ENCODE measurements at regions of chr12 and their contacts with region 1.

Region 1: GRCh38 chr12:105409801-105410471 is 79.4 kb downstream of the C12orf75 start:
- DNase-seq: no peak
- H3K4me3 ChIP-seq: no peak overlapping the region
- H3K27ac ChIP-seq: no peak overlapping the region
- H3K4me1 ChIP-seq: no peaks in the 10 kb centered on the region
- H3K27me3 ChIP-seq: no peaks in the 10 kb centered on the region
- CTCF ChIP-seq: no peak
- POLR2A ChIP-seq: no peak

Region 2: GRCh38 chr12:105292705-105293104 is 117.2 kb before region 1 on chr12:
- intact Hi-C with region 1: no loop called
- DNase-seq: no peak
- H3K4me3 ChIP-seq: no peak overlapping the region
- H3K27ac ChIP-seq: no peak overlapping the region
- H3K4me1 ChIP-seq: no peaks in the 10 kb centered on the region
- H3K27me3 ChIP-seq: no peaks in the 10 kb centered on the region
- CTCF ChIP-seq: no peak
- POLR2A ChIP-seq: no peak

Region 3: DNA sequence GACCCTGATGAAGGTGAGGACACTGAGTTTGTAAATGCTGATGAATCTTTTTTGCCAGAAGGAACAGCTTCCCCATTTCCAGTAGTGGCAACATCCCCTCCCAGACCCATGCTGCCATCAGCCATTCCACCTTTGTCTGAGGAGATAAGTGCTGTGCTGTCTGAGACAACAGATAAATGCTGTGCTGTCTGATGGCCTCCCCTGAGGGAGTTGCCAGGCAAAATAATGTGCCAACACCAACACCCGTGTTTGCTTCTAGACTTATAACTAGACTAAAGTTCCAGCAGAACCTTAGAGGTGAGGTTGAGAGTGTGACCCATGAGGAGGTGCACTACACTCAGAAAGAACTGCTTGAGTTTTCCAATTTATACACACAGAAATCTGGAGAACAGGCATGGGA is 270.0 kb after region 1 on chr12:
- intact Hi-C with region 1: loop called (anchors 10 kb)
- DNase-seq: no peak
- H3K4me3 ChIP-seq: no peak overlapping the region
- H3K27ac ChIP-seq: no peak overlapping the region
- H3K4me1 ChIP-seq: peaks cover 4% of the 10 kb centered on the region
- H3K27me3 ChIP-seq: no peaks in the 10 kb centered on the region
- CTCF ChIP-seq: no peak
- POLR2A ChIP-seq: no peak